ENCODE measurements at regions of chr19 and their contacts with region 1.

Region 1: GRCh38 chr19:38544034-38544958 is 73.5 kb downstream of the MAP4K1 start:
- DNase-seq: peak; percentile 53
- H3K4me3 Mint-ChIP-seq: peak overlapping the region; percentile 52
- H3K27ac Mint-ChIP-seq: no peak overlapping the region
- H3K4me1 Mint-ChIP-seq: peaks cover 16% of the 10 kb centered on the region
- H3K27me3 Mint-ChIP-seq: no peaks in the 10 kb centered on the region

Region 2: DNA sequence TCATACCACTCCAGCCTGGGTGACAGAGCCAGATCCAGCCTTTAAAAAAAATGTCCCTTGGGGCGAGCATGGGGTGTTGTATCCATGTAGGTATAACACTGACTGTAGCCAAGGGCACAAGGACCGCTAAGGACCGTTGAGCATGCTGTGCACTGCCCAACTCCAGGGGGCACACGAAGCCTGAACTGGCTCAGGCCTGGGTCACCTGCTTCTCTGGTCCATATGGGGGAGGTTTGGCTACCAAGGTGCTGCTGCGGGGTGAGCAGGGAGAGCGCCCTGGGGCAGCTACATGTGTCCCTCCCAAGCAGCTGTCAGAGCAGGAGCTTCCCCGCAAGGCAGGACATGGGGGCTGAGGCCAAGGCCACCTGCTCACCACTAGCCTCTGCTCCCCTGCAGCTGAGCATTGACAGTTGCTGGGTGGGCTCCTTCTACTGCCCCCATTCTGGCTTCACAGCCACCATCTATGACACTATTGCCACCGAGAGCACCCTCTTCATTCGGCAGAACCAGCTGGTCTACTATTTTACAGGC is 192.4 kb before region 1 on chr19:
- CTCF ChIA-PET with region 1: no interaction called
- intact Hi-C with region 1: no loop called
- DNase-seq: no peak
- H3K4me3 Mint-ChIP-seq: no peak overlapping the region
- H3K27ac Mint-ChIP-seq: no peak overlapping the region
- H3K4me1 Mint-ChIP-seq: no peaks in the 10 kb centered on the region
- H3K27me3 Mint-ChIP-seq: no peaks in the 10 kb centered on the region

Region 3: DNA sequence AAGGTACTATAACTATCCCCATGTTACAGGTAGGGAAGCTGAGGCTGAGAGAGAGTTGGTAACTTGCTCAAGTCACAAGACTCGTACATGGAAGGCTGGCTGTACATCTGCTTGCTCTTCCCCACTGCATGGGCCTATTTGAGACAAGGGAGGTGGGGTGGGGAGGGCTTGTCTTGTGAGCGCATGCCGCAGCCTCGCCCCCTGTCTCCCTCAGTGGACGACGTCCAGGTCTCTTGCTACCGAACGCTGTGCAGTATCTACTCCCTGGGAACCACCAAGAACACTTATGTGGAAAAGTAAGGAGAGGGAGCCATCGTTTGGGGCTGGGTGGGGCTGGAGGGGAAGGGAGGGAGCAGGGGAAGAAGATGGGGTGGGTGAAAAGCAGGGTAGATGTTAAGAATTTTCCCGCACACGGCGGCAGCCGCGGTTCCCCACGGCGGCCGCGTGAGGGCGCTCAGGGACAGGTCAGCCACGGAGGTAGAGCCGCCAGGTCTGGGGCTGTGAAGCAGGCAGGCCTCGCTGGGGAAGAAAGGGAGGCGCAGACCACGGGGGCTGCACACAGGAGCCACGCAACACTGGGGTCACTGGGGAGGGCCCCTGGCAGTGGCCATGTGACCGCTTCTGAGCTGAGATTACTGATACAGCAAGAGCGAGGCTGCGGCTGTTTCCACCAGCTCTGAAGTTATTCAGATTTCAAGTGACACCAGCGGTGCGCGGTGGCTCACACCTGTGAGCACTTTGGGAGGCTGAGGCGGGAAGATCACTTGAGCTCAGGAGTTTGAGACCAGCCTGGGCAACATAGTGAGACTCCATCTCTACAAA is 29.3 kb before region 1 on chr19:
- CTCF ChIA-PET with region 1: interaction called, 4 read pairs
- intact Hi-C with region 1: loop called (anchors 2 kb)
- DNase-seq: peak; percentile 82
- H3K4me3 Mint-ChIP-seq: no peak overlapping the region
- H3K27ac Mint-ChIP-seq: no peak overlapping the region
- H3K4me1 Mint-ChIP-seq: peaks cover 7% of the 10 kb centered on the region
- H3K27me3 Mint-ChIP-seq: no peaks in the 10 kb centered on the region

Region 4: GRCh38 chr19:38596057-38596981 is 52.0 kb after region 1 on chr19:
- CTCF ChIA-PET with region 1: no interaction called
- intact Hi-C with region 1: no loop called
- DNase-seq: peak; percentile 27
- H3K4me3 Mint-ChIP-seq: no peak overlapping the region
- H3K27ac Mint-ChIP-seq: no peak overlapping the region
- H3K4me1 Mint-ChIP-seq: no peaks in the 10 kb centered on the region
- H3K27me3 Mint-ChIP-seq: no peaks in the 10 kb centered on the region

Region 5: DNA sequence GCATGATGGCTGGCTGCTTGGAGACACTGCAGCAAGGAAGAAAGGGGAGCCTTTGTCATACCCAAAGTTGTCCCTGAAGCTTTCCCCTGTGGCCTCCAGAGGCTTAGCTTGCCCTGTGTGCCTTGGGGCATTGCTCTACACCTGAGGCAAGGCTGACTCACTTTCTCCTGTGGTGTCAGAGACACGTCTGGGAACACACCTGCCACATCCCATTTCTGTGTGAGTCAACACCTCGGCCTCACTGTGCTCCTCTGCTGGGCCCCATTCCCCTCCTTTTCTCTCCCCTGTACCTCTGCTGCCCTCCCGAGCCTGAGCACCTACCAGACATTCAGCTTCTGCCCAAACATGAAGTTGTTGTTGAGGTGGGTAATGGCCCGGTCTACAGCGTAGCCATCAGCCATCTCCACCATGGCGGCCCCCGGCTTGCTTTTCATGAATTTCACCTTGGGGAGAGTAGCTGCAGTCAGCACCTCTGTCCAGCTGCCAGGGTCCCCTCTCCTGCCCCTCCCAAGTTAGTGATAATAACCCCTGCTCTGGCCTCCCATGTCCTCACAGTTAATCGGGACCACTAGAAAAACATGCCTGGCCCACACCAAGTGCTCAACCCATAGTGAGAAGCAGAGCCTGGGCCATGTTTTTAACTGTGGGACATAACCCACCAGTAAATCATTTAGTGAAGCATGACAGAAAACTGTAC is 294.4 kb after region 1 on chr19:
- CTCF ChIA-PET with region 1: no interaction called
- intact Hi-C with region 1: loop called (anchors 1 kb)
- DNase-seq: peak; percentile 94
- H3K4me3 Mint-ChIP-seq: peak overlapping the region; percentile 37
- H3K27ac Mint-ChIP-seq: peak overlapping the region; percentile 89
- H3K4me1 Mint-ChIP-seq: peaks cover 63% of the 10 kb centered on the region
- H3K27me3 Mint-ChIP-seq: no peaks in the 10 kb centered on the region

Measured in activated naive CD4-positive, alpha-beta T cell treated with anti-CD3 and anti-CD28 coated beads for 36 hours (primary cell).